ENCODE measurements at regions of chr10 and their contacts with region 1.

Region 1: DNA sequence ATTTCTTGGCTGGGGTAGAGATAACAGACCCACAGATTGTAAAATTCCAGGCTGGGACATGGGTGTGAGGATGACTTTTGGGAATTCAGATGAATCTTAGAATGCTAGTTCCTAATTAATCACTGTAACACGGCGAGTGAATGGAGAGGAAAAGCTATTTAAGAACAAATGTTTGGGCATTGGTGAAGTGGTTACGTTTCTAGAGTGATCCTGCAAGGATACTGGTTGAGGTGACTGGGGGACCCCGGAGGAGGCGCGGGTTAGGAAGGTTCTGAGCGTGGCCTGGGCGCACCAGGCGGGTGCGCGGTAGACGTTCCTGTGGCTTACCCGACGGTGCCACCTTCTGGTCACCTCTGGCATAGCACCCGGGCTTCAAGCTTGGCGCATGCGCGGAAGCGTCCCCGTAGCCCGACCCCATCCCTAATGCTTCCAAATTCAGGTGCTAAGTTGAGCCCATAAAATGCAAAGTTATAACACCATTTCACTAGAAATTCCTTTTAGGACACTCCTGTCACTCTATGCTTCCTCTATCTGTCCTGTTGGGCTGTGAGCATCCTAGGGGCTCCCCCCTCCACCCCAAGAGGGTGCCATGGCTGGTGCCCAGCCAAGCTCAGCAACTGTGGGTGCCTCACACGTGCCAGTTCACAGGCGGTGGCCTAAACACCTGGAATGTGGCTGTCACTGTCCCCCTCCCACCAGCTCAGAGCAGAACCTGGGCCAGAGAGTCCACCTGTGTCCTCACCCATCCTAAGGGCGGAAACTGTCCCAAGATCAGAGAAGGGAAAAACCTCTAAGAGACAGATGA is 104.5 kb downstream of the PTPRE start:
- DNase-seq: peak; percentile 96
- H3K27ac ChIP-seq: no peak overlapping the region
- CTCF ChIP-seq: peak; percentile 96

Region 2: GRCh38 chr10:127906548-127907377 is 104.6 kb before region 1 on chr10 and contains the start of gene PTPRE:
- CTCF ChIA-PET with region 1: interaction called, 144 read pairs
- POLR2A ChIA-PET with region 1: interaction called, 3 read pairs
- DNase-seq: peak; percentile 89
- H3K27ac ChIP-seq: peak within 1 kb of the TSS; percentile 74
- CTCF ChIP-seq: peak; percentile 98

Region 3: GRCh38 chr10:127919418-127920271 is 91.7 kb before region 1 on chr10:
- CTCF ChIA-PET with region 1: interaction called, 18 read pairs
- POLR2A ChIA-PET with region 1: no interaction called
- DNase-seq: peak; percentile 27
- H3K27ac ChIP-seq: peak overlapping the region; percentile 95
- CTCF ChIP-seq: no peak; the same call in 1 of the 2 replicates

Region 4: GRCh38 chr10:127990846-127991542 is 20.4 kb before region 1 on chr10:
- CTCF ChIA-PET with region 1: interaction called, 15 read pairs
- POLR2A ChIA-PET with region 1: no interaction called
- DNase-seq: peak; percentile 90
- H3K27ac ChIP-seq: peak overlapping the region; percentile 89
- CTCF ChIP-seq: no peak

Region 5: GRCh38 chr10:128035557-128035973 is 24.2 kb after region 1 on chr10:
- CTCF ChIA-PET with region 1: interaction called, 15 read pairs
- POLR2A ChIA-PET with region 1: interaction called, 4 read pairs
- DNase-seq: no peak
- H3K27ac ChIP-seq: no peak overlapping the region; the same call in 1 of the 2 replicates
- CTCF ChIP-seq: no peak; the same call in 1 of the 2 replicates

Region 6: DNA sequence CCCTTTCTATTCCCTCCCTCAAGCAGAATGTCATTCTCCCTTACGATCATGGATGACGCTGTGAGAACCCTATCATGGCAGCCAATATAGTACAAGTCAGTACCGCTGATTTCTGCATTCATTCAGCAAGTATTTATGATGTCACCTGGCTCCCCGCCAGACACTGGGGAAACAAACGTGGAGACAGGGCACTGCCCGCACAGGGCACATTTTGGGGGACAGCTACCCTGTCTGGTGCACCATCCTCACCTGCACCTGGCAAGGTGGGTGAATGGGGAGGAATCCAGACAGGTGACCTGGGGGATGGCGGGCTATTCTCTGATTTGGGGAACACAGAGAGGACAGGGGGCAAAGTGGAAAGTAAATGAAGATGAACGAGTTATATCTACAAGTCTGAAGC is 86.4 kb after region 1 on chr10:
- CTCF ChIA-PET with region 1: no interaction called
- POLR2A ChIA-PET with region 1: no interaction called
- DNase-seq: no peak
- H3K27ac ChIP-seq: peak overlapping the region; percentile 29; the same call in 1 of the 2 replicates
- CTCF ChIP-seq: no peak